ENCODE measurements at regions of chr10 and their contacts with region 1.

Region 1: DNA sequence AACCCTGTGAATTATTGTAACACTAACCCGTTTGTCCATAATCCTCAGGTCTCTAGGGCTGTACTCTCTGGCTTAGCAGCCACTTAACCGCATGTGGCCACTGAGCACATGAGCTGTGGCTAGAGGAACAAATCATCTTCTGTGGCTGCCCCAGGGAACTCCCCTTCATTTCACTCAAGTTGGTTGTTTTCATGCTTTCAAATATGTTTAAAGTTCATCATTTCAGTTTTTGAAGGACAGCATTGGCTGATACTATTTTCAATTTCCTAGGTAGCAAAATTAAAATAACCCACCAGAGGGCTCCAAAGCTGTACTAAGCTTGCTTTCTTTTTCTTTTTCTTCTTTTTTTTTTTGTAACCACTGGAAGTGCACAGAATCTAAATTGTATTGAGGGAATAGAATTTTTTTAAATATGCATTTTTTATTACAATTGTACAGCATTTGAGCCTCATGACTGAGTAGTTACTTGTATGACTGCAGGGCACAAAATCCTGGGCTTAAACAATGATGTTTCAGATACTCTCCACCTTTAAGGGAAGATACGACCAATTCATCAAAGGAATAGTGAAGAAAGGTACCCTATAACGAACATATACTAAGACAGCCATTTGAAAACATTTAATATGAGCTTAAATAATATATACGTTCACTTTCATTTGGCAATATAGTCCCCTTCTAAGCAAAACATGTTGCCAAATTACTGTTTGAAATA is 38.6 kb downstream of the MRC1 start:
- DNase-seq: no peak
- ATAC-seq: peak; percentile 65
- H3K4me3 ChIP-seq: no peak overlapping the region
- H3K27ac ChIP-seq: no peak overlapping the region
- H3K4me1 ChIP-seq: no peaks in the 10 kb centered on the region
- H3K27me3 ChIP-seq: no peaks in the 10 kb centered on the region
- CTCF ChIP-seq: peak; percentile 29 to 57 (median 56); a peak in 4 of 6 replicates
- POLR2A ChIP-seq: no peak
- RAD21 ChIP-seq: peak; percentile 59

Region 2: DNA sequence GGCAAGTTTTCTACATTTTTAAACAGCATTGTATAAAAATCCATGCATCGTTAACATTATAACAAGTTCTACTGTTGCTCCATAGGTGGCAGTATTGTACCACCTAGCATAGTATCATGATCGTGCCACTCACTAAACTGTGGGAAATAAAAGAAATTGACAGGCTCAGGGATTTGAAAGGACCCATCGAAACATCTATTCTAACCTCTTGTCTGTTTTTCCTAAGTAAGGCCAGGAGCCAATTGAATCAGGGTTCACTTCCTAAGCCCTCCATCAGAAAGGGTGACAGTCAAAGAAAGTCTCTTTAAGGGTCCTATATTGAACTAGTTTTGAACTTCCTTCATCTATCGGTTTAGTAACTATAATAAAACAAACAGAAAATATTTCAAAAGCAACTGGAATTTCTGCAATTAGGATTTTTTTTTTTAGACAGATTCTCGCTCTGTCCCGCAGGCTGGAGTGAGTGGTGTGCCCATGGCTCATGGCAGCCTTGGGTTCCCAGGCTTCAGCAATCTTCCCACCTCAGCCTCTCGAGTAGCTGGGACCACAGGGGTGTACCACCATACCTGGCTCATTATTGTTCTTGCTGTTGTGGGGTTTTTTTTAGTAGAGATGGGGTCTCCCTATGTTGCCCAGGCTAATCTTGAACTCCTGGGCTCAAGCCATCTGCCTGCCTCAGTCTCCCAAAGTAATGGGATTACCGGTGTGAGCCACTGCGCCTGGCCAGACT is 240.0 kb before region 1 on chr10:
- CTCF ChIA-PET with region 1: no interaction called
- POLR2A ChIA-PET with region 1: no interaction called
- RAD21 ChIA-PET with region 1: no interaction called
- intact Hi-C with region 1: loop called (anchors 2 kb)
- DNase-seq: peak; percentile 40
- ATAC-seq: peak; percentile 93
- H3K4me3 ChIP-seq: no peak overlapping the region
- H3K27ac ChIP-seq: no peak overlapping the region
- H3K4me1 ChIP-seq: no peaks in the 10 kb centered on the region
- H3K27me3 ChIP-seq: no peaks in the 10 kb centered on the region
- CTCF ChIP-seq: peak; percentile 67 to 92 (median 85)
- POLR2A ChIP-seq: no peak
- RAD21 ChIP-seq: peak; percentile 95

Region 3: GRCh38 chr10:18104223-18104872 is 256.6 kb after region 1 on chr10:
- CTCF ChIA-PET with region 1: no interaction called
- POLR2A ChIA-PET with region 1: no interaction called
- RAD21 ChIA-PET with region 1: no interaction called
- intact Hi-C with region 1: loop called (anchors 1 kb)
- DNase-seq: peak; percentile 28
- ATAC-seq: peak; percentile 58
- H3K4me3 ChIP-seq: no peak overlapping the region
- H3K27ac ChIP-seq: no peak overlapping the region
- H3K4me1 ChIP-seq: no peaks in the 10 kb centered on the region
- H3K27me3 ChIP-seq: peaks cover 5% of the 10 kb centered on the region; the same call in 1 of the 2 replicates
- CTCF ChIP-seq: peak; percentile 58 to 81 (median 67); a peak in 5 of 6 replicates
- POLR2A ChIP-seq: no peak
- RAD21 ChIP-seq: peak; percentile 53

Region 4: DNA sequence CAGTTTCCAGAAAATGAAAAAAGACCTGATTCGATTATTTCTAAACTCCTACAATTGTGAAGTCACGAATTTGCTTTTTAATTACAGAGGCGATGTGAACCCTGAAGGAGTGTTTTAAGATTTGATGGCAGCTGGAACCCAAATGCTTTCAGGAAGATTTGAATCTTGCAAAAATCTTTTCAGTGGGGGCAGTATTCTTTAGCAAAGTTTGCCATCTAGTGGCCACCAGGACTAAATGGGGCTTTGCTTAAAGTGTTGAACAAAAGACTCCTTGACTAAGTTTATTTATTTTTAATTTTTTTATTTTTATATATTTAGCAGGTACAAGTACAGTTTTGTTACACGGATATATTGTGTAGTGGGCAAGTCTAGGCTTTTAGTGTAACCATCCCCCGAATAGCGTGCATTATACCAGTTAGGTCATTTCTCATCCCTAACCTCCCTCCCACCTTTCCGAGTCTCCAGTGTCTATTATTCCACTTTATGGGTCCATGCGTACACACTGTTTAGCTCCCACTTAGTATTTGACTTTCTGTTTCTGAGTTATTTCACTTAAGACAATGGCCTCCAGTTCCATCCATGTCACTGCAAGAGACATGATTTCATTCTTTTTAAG is 391.2 kb after region 1 on chr10:
- CTCF ChIA-PET with region 1: interaction called, 3 read pairs
- POLR2A ChIA-PET with region 1: no interaction called
- RAD21 ChIA-PET with region 1: interaction called in 1 of 2 experiments, 3 read pairs
- intact Hi-C with region 1: loop called (anchors 1 kb)
- DNase-seq: peak; percentile 34
- ATAC-seq: peak; percentile 65
- H3K4me3 ChIP-seq: no peak overlapping the region
- H3K27ac ChIP-seq: no peak overlapping the region
- H3K4me1 ChIP-seq: no peaks in the 10 kb centered on the region
- H3K27me3 ChIP-seq: peaks cover 9% of the 10 kb centered on the region; the same call in 1 of the 2 replicates
- CTCF ChIP-seq: peak; percentile 59 to 71 (median 70); a peak in 5 of 6 replicates
- POLR2A ChIP-seq: no peak
- RAD21 ChIP-seq: peak; percentile 70

Measured in HCT116 (cell line).